Activated CD4-positive, alpha-beta memory T cell treated with anti-CD3 and anti-CD28 coated beads for 36 hours (primary cell): ENCODE measurements at regions of chr19 and their contacts with region 1.

Region 1: DNA sequence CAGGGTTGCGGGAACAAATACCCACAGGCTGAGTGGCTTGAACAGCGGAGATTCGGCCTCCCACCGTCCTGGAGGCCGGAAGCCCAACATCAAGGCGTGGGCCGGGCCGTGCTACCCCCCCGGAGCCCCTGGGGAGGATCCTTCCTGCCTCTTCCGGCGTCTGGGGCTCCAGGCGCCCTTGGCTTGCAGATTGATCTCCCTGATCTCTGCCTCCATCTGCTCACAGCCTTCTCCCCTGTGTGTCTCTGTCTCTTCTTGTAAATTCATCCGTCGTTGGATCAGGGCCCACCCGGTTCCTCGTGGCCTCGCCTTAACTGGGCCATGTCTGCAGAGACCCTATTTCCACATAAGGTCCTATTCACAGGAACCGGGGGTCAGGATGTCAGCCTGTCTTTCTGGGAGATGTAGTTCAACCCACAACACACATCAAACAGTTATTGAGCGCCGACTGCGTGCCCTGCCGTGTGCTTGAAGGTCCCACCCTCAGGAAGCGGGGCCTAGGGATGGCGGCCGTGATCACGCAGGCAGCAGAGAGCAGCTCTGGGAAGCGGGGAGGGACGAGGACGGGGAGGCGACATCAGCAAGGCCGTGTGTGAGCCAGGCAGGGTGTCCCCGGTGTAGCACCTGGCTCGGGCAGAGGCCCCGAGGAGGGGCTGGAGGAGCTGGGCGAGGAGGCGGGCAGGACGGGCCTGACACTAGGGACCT is 21.3 kb downstream of the HCN2 start:
- DNase-seq: peak; percentile 78
- H3K4me3 Mint-ChIP-seq: peak overlapping the region; percentile 79
- H3K27ac Mint-ChIP-seq: peak overlapping the region; percentile 95
- H3K4me1 Mint-ChIP-seq: peaks cover 26% of the 10 kb centered on the region
- H3K27me3 Mint-ChIP-seq: no peaks in the 10 kb centered on the region

Region 2: DNA sequence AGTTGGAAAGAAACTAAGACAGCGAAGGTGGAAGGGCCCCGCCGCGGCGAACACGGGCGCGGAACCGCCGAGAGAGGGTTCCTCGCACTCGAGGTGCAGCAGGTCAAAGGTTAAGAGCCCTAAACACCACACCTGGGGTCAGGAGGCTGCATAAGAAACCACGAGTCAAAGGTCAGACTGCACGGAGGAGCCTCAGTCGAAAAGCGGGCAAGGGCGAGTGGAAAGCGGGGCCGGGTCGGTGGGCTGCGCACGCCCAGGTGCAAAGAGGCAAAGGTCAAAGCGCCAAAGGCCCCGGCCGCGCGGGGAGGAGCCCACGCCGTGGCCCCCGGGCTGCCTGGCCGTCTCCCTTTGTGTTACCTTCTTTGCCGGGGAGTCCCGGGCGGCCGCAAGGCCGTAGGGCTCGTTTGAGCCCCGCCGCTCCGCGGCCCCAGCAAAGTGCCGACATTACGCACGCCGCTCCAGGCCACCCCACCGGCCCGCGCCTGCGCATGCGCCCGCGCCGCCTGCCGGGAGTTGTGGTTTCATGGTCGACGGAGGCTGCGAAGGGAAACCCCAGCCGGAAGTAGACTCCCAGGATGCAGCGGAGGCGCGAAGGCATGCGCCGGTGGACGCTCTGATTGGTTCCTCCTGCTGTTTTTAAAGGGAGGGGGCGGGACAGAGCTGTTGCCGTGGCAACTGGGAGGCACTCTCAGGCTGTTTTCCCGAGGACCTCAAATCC is 22.3 kb after region 1 on chr19 and contains the start of gene POLRMT:
- CTCF ChIA-PET with region 1: interaction called, 4 read pairs
- POLR2A ChIA-PET with region 1: interaction called, 3 read pairs
- intact Hi-C with region 1: loop called (anchors 1 kb)
- DNase-seq: peak; percentile 99
- H3K4me3 Mint-ChIP-seq: peak within 1 kb of the TSS; percentile 96
- H3K27ac Mint-ChIP-seq: peak within 1 kb of the TSS; percentile 84
- H3K4me1 Mint-ChIP-seq: peaks cover 33% of the 10 kb centered on the region
- H3K27me3 Mint-ChIP-seq: no peaks in the 10 kb centered on the region
- total RNA-seq, gene POLRMT: 71.5 to 72.5 TPM

Region 3: DNA sequence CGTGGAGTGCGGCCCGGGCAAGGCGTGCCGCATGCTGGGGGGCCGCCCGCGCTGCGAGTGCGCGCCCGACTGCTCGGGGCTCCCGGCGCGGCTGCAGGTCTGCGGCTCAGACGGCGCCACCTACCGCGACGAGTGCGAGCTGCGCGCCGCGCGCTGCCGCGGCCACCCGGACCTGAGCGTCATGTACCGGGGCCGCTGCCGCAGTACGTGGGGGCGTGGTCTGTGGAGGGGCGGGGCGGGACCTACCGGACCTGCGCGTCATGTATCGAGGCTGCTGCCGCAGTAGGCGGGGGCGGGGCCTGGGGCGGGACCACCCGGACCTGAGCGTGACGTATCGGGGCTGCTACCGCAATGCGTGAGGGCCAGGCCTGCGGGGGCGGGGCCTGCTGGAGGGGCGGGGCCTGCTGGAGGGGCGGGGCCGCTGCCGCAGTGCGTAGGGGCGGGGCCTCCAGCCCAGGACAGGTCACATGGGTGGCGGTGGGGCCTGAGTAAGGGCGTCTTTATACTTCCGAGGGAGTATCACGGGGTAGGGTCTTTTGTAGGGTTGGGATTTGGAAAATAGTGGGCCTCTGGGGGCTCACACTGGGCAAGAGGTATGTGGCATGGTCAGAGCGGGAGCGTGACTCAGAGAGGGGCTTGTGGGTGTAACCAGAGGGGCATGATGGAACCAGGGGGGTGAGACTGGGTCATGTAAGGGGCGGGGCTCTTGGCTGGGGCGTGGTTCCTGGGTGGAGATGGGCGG is 69.5 kb after region 1 on chr19:
- CTCF ChIA-PET with region 1: no interaction called
- POLR2A ChIA-PET with region 1: no interaction called
- intact Hi-C with region 1: loop called (anchors 2 kb)
- DNase-seq: peak; percentile 100
- H3K4me3 Mint-ChIP-seq: peak overlapping the region; percentile 79
- H3K27ac Mint-ChIP-seq: peak overlapping the region; percentile 91
- H3K4me1 Mint-ChIP-seq: no peaks in the 10 kb centered on the region
- H3K27me3 Mint-ChIP-seq: peaks cover 4% of the 10 kb centered on the region